Astrocyte of the cerebellum (primary cell): ENCODE measurements at regions of chr6 and their contacts with region 1.

Region 1: GRCh38 chr6:148271711-148272439 is 70.8 kb upstream of the SASH1 start:
- DNase-seq: peak; percentile 32
- H3K4me3 ChIP-seq: no peak overlapping the region
- CTCF ChIP-seq: no peak

Region 2: GRCh38 chr6:148311966-148312669 is 40.2 kb after region 1 on chr6:
- in situ Hi-C with region 1: loop called (anchors 5 kb)
- DNase-seq: no peak
- H3K4me3 ChIP-seq: no peak overlapping the region
- CTCF ChIP-seq: no peak

Region 3: DNA sequence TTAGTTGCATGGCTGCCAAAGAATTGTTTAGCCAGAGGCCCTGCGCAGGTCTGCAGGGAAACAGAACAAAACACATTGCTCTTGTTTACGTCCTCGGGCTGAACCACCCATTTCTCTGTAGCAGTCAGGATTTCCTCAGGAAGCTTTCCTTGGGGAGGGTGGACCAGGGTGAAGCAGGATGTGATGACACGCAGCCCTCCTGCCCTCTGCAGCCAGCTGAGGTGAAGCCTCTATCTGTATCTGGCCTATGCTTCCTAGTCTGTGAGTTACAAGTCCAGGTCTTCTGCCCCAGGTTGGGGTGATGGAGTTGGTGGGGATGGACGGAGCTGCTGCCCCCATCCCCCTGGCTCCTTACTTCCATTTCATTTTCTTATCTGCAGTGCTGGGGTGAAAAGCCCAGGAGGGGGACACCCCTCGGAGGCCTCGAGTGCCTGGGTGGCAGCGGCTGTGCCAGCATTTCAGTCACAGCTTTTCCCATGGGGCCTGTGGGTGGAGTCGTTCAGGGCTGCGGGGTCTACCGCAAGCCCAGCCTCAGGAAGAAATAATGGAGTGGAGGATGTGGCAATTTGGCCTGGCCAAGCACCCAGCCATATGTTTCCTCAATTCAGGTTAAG is 95.6 kb after region 1 on chr6:
- in situ Hi-C with region 1: loop called (anchors 5 kb)
- DNase-seq: peak; percentile 6
- H3K4me3 ChIP-seq: no peak overlapping the region
- CTCF ChIP-seq: no peak